ENCODE measurements at regions of chr11 and their contacts with region 1.

Region 1: DNA sequence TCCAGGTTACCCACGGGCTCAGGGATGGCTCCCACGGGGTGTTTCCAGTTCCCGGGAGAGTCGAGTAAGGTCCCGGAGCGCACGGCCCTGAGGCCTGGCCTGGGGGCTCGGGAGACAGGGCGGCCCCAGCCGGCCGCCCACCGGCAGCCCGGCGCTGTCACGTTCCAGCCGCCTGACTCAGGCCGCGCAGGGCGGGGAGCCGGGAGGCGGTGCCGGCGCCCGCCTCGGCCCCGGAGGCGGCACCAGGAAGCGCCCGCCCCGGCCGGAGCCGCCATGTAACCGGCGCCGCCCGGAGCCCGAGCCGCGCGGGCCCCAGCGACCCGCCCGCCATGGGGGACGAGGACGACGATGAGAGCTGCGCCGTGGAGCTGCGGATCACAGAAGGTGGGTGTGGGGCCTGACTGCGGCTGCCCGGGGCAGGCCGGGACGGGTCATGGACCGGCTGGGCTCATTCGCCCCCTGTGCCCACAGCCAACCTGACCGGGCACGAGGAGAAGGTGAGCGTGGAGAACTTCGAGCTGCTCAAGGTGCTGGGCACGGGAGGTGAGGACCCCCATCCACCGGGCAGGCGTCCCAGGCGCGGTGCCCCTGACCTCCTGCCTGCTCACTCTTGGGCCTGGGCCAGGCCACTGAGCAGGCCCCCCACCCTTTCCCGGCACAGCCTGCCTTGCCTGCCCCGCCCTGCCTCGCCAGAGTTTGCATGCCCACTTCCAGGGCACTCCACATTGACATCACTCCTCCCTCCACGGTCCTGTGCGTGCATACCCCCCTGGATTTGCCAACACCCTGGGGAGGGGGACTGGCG is at the start of gene RPS6KA4:
- DNase-seq: peak; percentile 49
- ATAC-seq: peak; percentile 49
- H3K4me3 Mint-ChIP-seq: peak within 1 kb of the TSS; percentile 80
- H3K27ac Mint-ChIP-seq: peak within 1 kb of the TSS; percentile 50
- H3K4me1 Mint-ChIP-seq: peaks cover 26% of the 10 kb centered on the region
- H3K27me3 Mint-ChIP-seq: no peaks in the 10 kb centered on the region
- CTCF ChIP-seq: no peak
- total RNA-seq, gene RPS6KA4: 16.8 to 18.3 TPM (median 18.3 TPM) in 3 replicates

Region 2: GRCh38 chr11:64284048-64284961 is 74.8 kb before region 1 on chr11 and contains the start of gene BAD:
- CTCF ChIA-PET with region 1: interaction called, 15 read pairs
- POLR2A ChIA-PET with region 1: interaction called, 3 read pairs
- DNase-seq: peak; percentile 97
- ATAC-seq: peak; percentile 95
- H3K4me3 Mint-ChIP-seq: peak within 1 kb of the TSS; percentile 80
- H3K27ac Mint-ChIP-seq: peak within 1 kb of the TSS; percentile 76; the same call in 1 of the 2 replicates
- H3K4me1 Mint-ChIP-seq: peaks cover 8% of the 10 kb centered on the region
- H3K27me3 Mint-ChIP-seq: peaks cover 8% of the 10 kb centered on the region
- CTCF ChIP-seq: no peak
- total RNA-seq, gene BAD: 30.5 to 34.7 TPM (median 31.3 TPM) in 3 replicates

Region 3: GRCh38 chr11:64341851-64342791 is 17.0 kb before region 1 on chr11:
- CTCF ChIA-PET with region 1: interaction called, 437 read pairs
- POLR2A ChIA-PET with region 1: interaction called, 7 read pairs
- DNase-seq: peak; percentile 97
- ATAC-seq: peak; percentile 75
- H3K4me3 Mint-ChIP-seq: peak overlapping the region; percentile 69
- H3K27ac Mint-ChIP-seq: no peak overlapping the region
- H3K4me1 Mint-ChIP-seq: peaks cover 21% of the 10 kb centered on the region
- H3K27me3 Mint-ChIP-seq: peaks cover 30% of the 10 kb centered on the region
- CTCF ChIP-seq: no peak

Region 4: GRCh38 chr11:64409707-64410403 is 50.7 kb after region 1 on chr11:
- CTCF ChIA-PET with region 1: interaction called, 26 read pairs
- POLR2A ChIA-PET with region 1: no interaction called
- DNase-seq: no peak
- ATAC-seq: peak; percentile 16; the same call in 1 of the 2 replicates
- H3K4me3 Mint-ChIP-seq: no peak overlapping the region
- H3K27ac Mint-ChIP-seq: no peak overlapping the region
- H3K4me1 Mint-ChIP-seq: peaks cover 24% of the 10 kb centered on the region
- H3K27me3 Mint-ChIP-seq: peaks cover 18% of the 10 kb centered on the region
- CTCF ChIP-seq: no peak

Region 5: GRCh38 chr11:64516226-64516625 is 157.1 kb after region 1 on chr11:
- CTCF ChIA-PET with region 1: interaction called, 11 read pairs
- POLR2A ChIA-PET with region 1: no interaction called
- DNase-seq: no peak
- ATAC-seq: no peak
- H3K4me3 Mint-ChIP-seq: no peak overlapping the region
- H3K27ac Mint-ChIP-seq: no peak overlapping the region
- H3K4me1 Mint-ChIP-seq: no peaks in the 10 kb centered on the region
- H3K27me3 Mint-ChIP-seq: peaks cover 68% of the 10 kb centered on the region
- CTCF ChIP-seq: peak; percentile 44; the same call in 1 of the 2 replicates

Region 6: DNA sequence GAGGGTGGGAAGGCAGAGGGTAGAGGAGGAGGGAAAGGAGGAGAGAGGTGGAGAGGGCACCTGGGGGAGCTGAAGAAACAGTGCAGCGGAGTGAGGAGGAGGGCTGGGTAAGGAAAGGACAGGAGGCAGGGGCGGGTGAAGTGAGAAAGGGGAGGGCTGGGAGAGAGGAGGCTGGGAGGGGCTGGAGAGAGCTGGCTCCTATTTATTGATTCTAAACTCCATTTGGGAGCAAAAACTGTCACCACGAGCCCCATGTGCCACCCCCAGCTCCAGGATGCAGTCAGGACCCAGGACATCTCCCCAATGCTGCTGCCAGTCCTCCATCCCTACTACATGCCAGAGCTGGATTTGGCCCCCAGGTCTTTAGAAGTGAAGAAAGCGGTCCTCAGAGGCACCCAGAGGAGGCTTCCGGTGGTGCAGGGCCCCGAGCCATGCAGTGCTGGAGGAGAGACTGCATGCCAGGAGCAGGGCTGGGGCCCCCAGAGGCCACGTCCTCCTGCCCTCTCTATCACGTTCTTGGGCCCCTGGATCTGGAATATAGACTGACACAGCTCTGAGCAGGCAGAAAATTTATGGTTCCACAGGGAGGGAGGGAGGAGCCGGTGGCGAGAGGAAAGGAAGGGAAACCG is 285.7 kb after region 1 on chr11:
- CTCF ChIA-PET with region 1: interaction called, 55 read pairs
- POLR2A ChIA-PET with region 1: no interaction called
- DNase-seq: peak; percentile 51
- ATAC-seq: peak; percentile 53
- H3K4me3 Mint-ChIP-seq: peak overlapping the region; percentile 80
- H3K27ac Mint-ChIP-seq: no peak overlapping the region
- H3K4me1 Mint-ChIP-seq: peaks cover 25% of the 10 kb centered on the region
- H3K27me3 Mint-ChIP-seq: peaks cover 44% of the 10 kb centered on the region
- CTCF ChIP-seq: no peak

Measured in WTC11 (cell line).